ENCODE measurements at regions of chr3 and their contacts with region 1.

Region 1: GRCh38 chr3:56862352-56863074 is 60.8 kb upstream of the ARHGEF3 start:
- DNase-seq: no peak
- H3K4me3 ChIP-seq: no peak overlapping the region
- H3K27ac ChIP-seq: no peak overlapping the region
- H3K4me1 ChIP-seq: no peaks in the 10 kb centered on the region; a peak in 1 of 7 replicates
- H3K27me3 ChIP-seq: no peaks in the 10 kb centered on the region
- CTCF ChIP-seq: no peak
- EP300 ChIP-seq: no peak
- POLR2A ChIP-seq: no peak
- RAD21 ChIP-seq: no peak

Region 2: DNA sequence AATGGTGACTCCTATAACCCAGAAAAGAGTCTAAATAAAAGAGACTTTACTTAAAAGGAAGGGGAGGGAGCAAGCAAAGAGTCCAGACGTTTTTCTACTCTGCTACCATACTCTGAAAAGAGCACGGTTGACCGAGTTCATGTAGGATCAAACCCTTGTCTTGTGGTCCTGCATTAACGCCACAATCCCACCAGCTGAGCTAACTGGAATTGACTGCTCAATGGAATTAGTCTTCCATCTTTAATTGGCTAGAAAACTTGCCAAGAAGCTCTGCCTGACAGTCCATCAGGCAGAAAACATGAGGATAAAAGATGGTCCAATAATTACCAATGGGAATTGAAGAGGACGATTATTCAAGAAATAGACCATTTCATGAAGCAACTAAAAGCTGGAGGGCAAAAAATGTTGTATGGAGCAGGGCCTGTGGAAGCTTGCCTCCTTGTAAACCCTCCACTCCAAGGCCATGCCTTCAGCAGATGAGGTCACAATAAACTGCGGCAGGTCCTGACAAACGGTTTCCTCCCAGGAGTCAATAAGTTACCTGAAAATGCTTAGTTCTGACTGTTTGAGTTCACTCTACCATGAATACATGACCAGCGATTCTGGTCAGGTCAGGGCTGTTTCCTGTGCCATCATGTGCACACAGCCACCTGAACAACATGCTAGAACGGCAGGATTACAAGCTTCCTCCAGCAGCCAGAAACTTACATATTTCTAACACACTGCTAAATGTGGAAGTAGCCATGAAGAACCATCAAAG is 25.1 kb before region 1 on chr3:
- CTCF ChIA-PET with region 1: interaction called, 11 read pairs
- POLR2A ChIA-PET with region 1: no interaction called
- DNase-seq: no peak
- H3K4me3 ChIP-seq: no peak overlapping the region
- H3K27ac ChIP-seq: no peak overlapping the region
- H3K4me1 ChIP-seq: no peaks in the 10 kb centered on the region
- H3K27me3 ChIP-seq: no peaks in the 10 kb centered on the region
- CTCF ChIP-seq: no peak
- EP300 ChIP-seq: no peak
- POLR2A ChIP-seq: no peak
- RAD21 ChIP-seq: no peak

Measured in H1 (cell line).